Activated CD4-positive, alpha-beta T cell treated with anti-CD3 and anti-CD28 coated beads, Interleukin-2, amount 10 ng/mL, durations not matched to agents 24 days and 14 days (primary cell): ENCODE measurements at regions of chr18 and their contacts with region 1.

Region 1: GRCh38 chr18:35972197-35973052 is at the start of gene RMP24:
- DNase-seq: peak; percentile 97
- H3K4me3 Mint-ChIP-seq: peak within 1 kb of the TSS; percentile 99
- H3K27ac Mint-ChIP-seq: peak within 1 kb of the TSS; percentile 92
- H3K4me1 Mint-ChIP-seq: peaks cover 43% of the 10 kb centered on the region
- H3K27me3 Mint-ChIP-seq: no peaks in the 10 kb centered on the region

Region 2: DNA sequence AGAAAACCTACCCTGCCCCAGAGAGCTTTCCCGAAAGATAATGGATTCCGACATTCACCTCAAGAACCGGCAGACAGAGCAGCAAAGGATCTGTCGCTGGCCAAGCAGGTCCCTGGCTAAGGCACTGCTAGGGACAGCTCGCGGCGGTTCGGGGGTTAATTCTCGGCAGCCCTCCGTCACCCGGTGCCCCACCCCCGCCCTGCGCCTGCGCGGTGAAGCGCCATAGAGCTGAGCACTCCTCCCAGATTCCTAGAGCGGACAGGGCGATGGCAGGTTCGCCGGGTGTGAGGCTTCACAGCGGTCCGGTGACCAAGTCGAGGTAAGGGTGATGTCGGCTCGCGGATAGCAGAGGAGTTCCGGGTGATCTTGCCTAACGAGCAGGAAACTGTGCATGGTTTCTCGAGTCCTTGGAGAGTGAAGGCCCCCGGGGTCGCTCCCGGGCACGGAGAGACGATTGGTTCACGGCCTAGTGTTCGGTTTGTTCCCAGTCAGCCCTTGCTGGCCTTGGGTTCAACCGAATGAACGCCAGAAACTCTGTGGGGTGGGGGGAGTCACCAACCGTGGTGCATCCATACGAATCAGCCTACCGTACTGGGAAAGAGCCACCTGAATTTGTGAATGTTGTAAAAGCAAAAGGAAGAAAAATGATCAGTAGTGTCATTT is 682.2 kb before region 1 on chr18 and contains the start of gene ZSCAN30:
- intact Hi-C with region 1: loop called (anchors 5 kb)
- DNase-seq: peak; percentile 99
- H3K4me3 Mint-ChIP-seq: peak within 1 kb of the TSS; percentile 100
- H3K27ac Mint-ChIP-seq: peak within 1 kb of the TSS; percentile 95
- H3K4me1 Mint-ChIP-seq: peaks cover 37% of the 10 kb centered on the region
- H3K27me3 Mint-ChIP-seq: no peaks in the 10 kb centered on the region
- total RNA-seq, gene ZSCAN30: 11.6 and 12.2 TPM in 2 replicates

Region 3: GRCh38 chr18:35376742-35377695 is 595.4 kb before region 1 on chr18 and contains the start of gene ZNF396:
- intact Hi-C with region 1: loop called (anchors 1 kb)
- DNase-seq: peak; percentile 92
- H3K4me3 Mint-ChIP-seq: peak within 1 kb of the TSS; percentile 75
- H3K27ac Mint-ChIP-seq: peak within 1 kb of the TSS; percentile 41
- H3K4me1 Mint-ChIP-seq: peaks cover 2% of the 10 kb centered on the region
- H3K27me3 Mint-ChIP-seq: peaks cover 26% of the 10 kb centered on the region
- total RNA-seq, gene ZNF396: 0.19 and 0.26 TPM in 2 replicates

Region 4: GRCh38 chr18:35580701-35581539 is 391.5 kb before region 1 on chr18:
- intact Hi-C with region 1: loop called (anchors 5 kb)
- DNase-seq: peak; percentile 86
- H3K4me3 Mint-ChIP-seq: peak overlapping the region; percentile 73
- H3K27ac Mint-ChIP-seq: peak overlapping the region; percentile 66
- H3K4me1 Mint-ChIP-seq: peaks cover 22% of the 10 kb centered on the region
- H3K27me3 Mint-ChIP-seq: peaks cover 12% of the 10 kb centered on the region

Region 5: GRCh38 chr18:35842536-35842935 is 129.9 kb before region 1 on chr18:
- intact Hi-C with region 1: no loop called
- DNase-seq: no peak
- H3K4me3 Mint-ChIP-seq: no peak overlapping the region
- H3K27ac Mint-ChIP-seq: no peak overlapping the region
- H3K4me1 Mint-ChIP-seq: no peaks in the 10 kb centered on the region
- H3K27me3 Mint-ChIP-seq: peaks cover 3% of the 10 kb centered on the region

Region 6: DNA sequence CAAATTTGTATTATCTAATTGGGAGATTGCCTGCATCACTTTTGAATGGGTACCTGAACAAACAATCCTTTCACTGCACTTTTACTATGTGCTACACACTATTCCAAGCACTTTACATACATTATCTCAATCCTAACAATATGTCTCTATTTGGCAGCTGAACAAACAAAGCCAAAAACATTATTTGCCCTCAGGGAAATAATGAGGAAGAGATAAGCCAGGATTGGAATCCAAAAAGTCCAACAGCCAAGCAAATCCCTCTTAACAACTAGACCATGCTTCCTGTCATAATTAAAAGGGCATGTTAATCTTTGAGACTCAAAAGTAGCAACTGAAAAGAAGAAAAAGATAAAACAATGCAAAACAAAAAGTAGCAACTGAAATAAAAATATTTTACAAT is 62.8 kb after region 1 on chr18:
- intact Hi-C with region 1: no loop called
- DNase-seq: no peak
- H3K4me3 Mint-ChIP-seq: no peak overlapping the region
- H3K27ac Mint-ChIP-seq: no peak overlapping the region
- H3K4me1 Mint-ChIP-seq: peaks cover 7% of the 10 kb centered on the region
- H3K27me3 Mint-ChIP-seq: no peaks in the 10 kb centered on the region

Region 7: DNA sequence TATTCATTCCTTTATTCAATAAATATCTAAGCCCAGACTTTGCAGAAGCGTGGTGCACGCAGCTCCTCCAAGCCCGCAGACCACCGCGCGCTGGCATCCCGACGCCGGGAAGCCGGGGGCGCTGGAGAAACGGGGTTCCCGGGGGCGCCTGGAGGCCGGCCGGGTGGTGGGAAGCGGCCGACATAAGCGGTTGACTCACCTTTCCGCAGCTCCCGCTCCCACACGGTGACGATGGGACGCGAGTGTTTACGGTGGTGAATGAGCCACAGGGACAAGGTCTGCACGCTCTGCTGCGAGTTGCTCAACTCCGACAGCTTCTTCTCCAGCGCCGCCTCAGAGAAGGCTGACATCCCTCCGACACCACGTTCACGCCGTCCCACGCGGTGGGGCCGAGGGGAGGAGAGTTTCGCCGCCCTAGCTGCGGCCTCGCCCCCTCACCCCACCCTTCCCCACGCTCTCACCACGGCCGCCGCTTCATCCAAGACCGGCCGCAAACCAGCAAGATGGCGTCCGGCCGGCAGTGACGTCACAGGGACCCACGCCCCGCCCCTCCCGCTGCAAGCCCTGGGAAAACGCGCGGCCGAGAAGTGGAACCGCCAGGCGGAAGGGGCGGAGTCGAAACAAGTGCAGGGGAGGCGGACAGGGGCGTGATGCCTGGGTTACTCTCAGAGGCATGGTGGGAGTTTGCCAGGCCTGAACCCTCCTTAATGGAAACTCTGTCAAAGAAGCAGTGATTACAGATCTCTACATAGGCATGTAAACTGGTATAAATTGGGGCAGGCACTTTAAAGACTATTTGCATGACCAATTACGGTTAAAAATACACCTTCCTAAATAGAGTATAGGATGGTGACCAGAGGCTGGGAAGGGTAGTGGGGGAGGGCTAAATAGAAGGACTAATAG is 94.9 kb after region 1 on chr18 and contains the start of gene RPRD1A:
- intact Hi-C with region 1: loop called (anchors 1 kb)
- DNase-seq: peak; percentile 99
- H3K4me3 Mint-ChIP-seq: peak within 1 kb of the TSS; percentile 95
- H3K27ac Mint-ChIP-seq: peak within 1 kb of the TSS; percentile 97
- H3K4me1 Mint-ChIP-seq: peaks cover 28% of the 10 kb centered on the region
- H3K27me3 Mint-ChIP-seq: peaks cover 7% of the 10 kb centered on the region
- total RNA-seq, gene RPRD1A: 24.6 and 27.4 TPM in 2 replicates

Region 8: GRCh38 chr18:36828630-36829361 is 856.4 kb after region 1 on chr18 and contains the starts of genes KIAA1328 and TPGS2:
- intact Hi-C with region 1: loop called (anchors 2 kb)
- DNase-seq: peak; percentile 97
- H3K4me3 Mint-ChIP-seq: peak within 1 kb of the TSS; percentile 83
- H3K27ac Mint-ChIP-seq: peak within 1 kb of the TSS; percentile 98
- H3K4me1 Mint-ChIP-seq: peaks cover 45% of the 10 kb centered on the region
- H3K27me3 Mint-ChIP-seq: no peaks in the 10 kb centered on the region
- total RNA-seq, gene KIAA1328: 7.3 and 7.6 TPM in 2 replicates
- total RNA-seq, gene TPGS2: 76.9 and 77.5 TPM in 2 replicates